HepG2 (cell line): ENCODE measurements at regions of chr19 and their contacts with region 1.

Region 1: GRCh38 chr19:2475702-2476450 is at the start of gene GADD45B:
- DNase-seq: peak; percentile 93
- ATAC-seq: peak; percentile 56
- H3K4me3 ChIP-seq: peak within 1 kb of the TSS; percentile 92 to 100 (median 98)
- H3K27ac ChIP-seq: peak within 1 kb of the TSS; percentile 56
- H3K4me1 ChIP-seq: peaks cover 33% of the 10 kb centered on the region
- H3K27me3 ChIP-seq: no peaks in the 10 kb centered on the region; a peak in 2 of 5 replicates
- CTCF ChIP-seq: no peak
- EP300 ChIP-seq: no peak; a peak in 2 of 4 replicates
- POLR2A ChIP-seq: peak; percentile 100
- RAD21 ChIP-seq: peak; percentile 36; the same call in 1 of the 2 replicates
- total RNA-seq, gene GADD45B: 3.2 and 4.6 TPM in 2 replicates

Region 2: DNA sequence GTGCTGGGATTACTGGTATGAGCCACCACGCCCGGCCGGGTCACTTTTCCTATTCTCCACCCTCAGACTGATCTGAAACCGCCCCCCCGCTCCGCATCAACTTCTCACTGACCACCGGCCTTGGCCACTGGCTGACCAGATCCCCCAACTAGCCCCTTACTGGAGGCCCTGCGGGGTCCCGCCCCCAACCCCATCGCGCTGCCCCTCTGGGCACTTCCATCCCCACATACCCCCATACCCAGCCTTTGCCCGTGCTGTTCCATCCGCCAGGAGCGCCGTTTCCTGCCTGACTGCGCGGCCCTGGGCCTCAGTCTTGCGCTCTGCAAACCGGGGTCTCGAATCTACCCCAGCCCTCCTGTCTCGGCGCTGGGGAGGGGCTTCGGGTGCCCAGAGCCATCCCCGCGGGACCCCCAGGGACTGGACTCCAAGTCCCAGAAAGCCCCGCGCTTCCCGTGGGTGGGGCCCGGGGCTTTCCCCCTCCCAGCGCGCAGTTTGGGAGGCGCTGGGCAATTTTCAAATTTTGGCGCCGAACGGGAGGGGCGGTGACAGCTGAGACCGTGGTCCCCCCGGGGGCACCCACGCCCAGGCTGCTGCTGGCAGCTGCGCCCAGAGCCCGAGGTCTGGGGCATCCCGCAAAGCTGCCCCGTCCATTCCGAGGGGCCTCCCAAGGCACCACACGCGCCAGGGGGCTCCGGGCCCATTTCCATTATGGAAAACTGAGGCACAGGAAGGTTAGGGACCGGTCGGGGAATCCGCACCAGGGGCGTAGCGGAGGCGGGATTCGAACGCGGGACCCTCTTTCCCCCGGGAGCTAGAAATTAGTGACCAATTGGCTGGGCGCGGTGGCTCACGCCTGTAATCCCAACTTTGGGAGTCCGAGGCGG is 13.9 kb before region 1 on chr19:
- CTCF ChIA-PET with region 1: no interaction called
- POLR2A ChIA-PET with region 1: interaction called, 42 read pairs
- in situ Hi-C with region 1: no loop called
- intact Hi-C with region 1: no loop called
- DNase-seq: no peak
- ATAC-seq: no peak
- H3K4me3 ChIP-seq: no peak overlapping the region
- H3K27ac ChIP-seq: no peak overlapping the region
- H3K4me1 ChIP-seq: peaks cover 59% of the 10 kb centered on the region
- H3K27me3 ChIP-seq: no peaks in the 10 kb centered on the region
- CTCF ChIP-seq: no peak
- EP300 ChIP-seq: no peak
- POLR2A ChIP-seq: no peak
- RAD21 ChIP-seq: no peak

Region 3: GRCh38 chr19:2512523-2513431 is 36.9 kb after region 1 on chr19:
- CTCF ChIA-PET with region 1: no interaction called
- POLR2A ChIA-PET with region 1: interaction called, 31 read pairs
- in situ Hi-C with region 1: no loop called
- intact Hi-C with region 1: no loop called
- DNase-seq: no peak
- ATAC-seq: peak; percentile 46
- H3K4me3 ChIP-seq: no peak overlapping the region; a peak in 1 of 6 replicates
- H3K27ac ChIP-seq: no peak overlapping the region
- H3K4me1 ChIP-seq: peaks cover 21% of the 10 kb centered on the region
- H3K27me3 ChIP-seq: peaks cover 0 to 15% of the 10 kb centered on the region in 2 experiments; a peak in 2 of 5 replicates
- CTCF ChIP-seq: no peak
- EP300 ChIP-seq: no peak
- POLR2A ChIP-seq: no peak
- RAD21 ChIP-seq: no peak

Region 4: GRCh38 chr19:2543463-2544442 is 67.9 kb after region 1 on chr19:
- CTCF ChIA-PET with region 1: no interaction called
- POLR2A ChIA-PET with region 1: interaction called, 199 read pairs
- in situ Hi-C with region 1: loop called (anchors 5 kb)
- intact Hi-C with region 1: loop called (anchors 5 kb)
- DNase-seq: peak; percentile 94
- ATAC-seq: peak; percentile 74
- H3K4me3 ChIP-seq: peak overlapping the region in 2 of 3 experiments; percentile 28 to 65; a peak in 4 of 6 replicates
- H3K27ac ChIP-seq: peak overlapping the region; percentile 98
- H3K4me1 ChIP-seq: peaks cover 81% of the 10 kb centered on the region
- H3K27me3 ChIP-seq: no peaks in the 10 kb centered on the region
- CTCF ChIP-seq: peak; percentile 73
- EP300 ChIP-seq: peak in 1 of 2 experiments; percentile 78; a peak in 3 of 4 replicates
- POLR2A ChIP-seq: peak; percentile 45 to 77
- RAD21 ChIP-seq: peak; percentile 88

Region 5: GRCh38 chr19:2602391-2603181 is 126.7 kb after region 1 on chr19:
- CTCF ChIA-PET with region 1: no interaction called
- POLR2A ChIA-PET with region 1: interaction called, 40 read pairs
- in situ Hi-C with region 1: no loop called
- intact Hi-C with region 1: no loop called
- DNase-seq: no peak
- ATAC-seq: peak; percentile 30; the same call in 2 of the 3 replicates
- H3K4me3 ChIP-seq: peak overlapping the region in 1 of 3 experiments; percentile 31; a peak in 1 of 6 replicates
- H3K27ac ChIP-seq: no peak overlapping the region
- H3K4me1 ChIP-seq: peaks cover 30% of the 10 kb centered on the region
- H3K27me3 ChIP-seq: no peaks in the 10 kb centered on the region
- CTCF ChIP-seq: no peak
- EP300 ChIP-seq: no peak
- POLR2A ChIP-seq: no peak
- RAD21 ChIP-seq: no peak

Region 6: DNA sequence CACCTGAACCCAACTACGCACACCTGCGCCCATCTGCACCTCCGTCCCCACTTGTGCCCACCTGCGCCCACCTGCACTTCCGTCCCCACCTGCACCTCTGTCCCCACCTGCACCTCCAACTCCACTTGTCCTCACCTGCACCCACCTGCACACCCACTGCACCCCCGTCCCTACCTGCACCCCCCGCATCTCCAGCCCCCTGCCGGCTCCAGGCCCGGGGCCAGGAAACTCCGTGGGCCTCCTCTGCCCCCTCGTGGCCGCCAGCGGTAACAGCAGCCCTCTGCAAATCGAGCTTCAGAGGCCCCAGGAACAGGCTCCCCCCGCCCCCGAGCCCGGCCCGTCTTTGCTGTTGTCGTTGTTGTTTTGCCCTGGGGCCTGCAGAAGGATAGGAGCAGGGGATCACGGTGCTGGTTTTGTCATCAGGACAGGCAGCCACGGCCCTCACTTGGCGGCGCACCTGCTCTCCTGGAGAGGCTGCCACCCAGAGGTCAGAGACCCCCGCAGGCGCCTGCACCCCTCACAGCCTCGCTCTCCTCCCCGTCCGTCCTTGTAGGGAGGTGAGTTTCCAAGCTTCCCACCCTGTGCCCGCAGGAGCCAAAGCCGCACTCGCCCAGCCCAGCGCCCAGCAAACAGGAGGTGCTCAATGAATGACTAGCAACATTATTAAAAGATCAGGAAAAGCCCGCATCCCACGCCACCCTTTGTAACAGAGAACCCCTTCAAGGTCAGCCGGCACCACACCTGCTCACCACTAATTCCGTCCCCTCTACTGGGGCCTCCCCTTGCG is 161.2 kb after region 1 on chr19:
- CTCF ChIA-PET with region 1: interaction called, 3 read pairs
- POLR2A ChIA-PET with region 1: interaction called, 25 read pairs
- in situ Hi-C with region 1: no loop called
- intact Hi-C with region 1: no loop called
- DNase-seq: peak; percentile 34
- ATAC-seq: peak; percentile 70
- H3K4me3 ChIP-seq: peak overlapping the region; percentile 1 to 63 (median 44); a peak in 3 of 6 replicates
- H3K27ac ChIP-seq: no peak overlapping the region
- H3K4me1 ChIP-seq: peaks cover 76% of the 10 kb centered on the region
- H3K27me3 ChIP-seq: no peaks in the 10 kb centered on the region; a peak in 1 of 5 replicates
- CTCF ChIP-seq: peak; percentile 94
- EP300 ChIP-seq: no peak
- POLR2A ChIP-seq: no peak
- RAD21 ChIP-seq: peak; percentile 82

Region 7: GRCh38 chr19:2926341-2927014 is 450.6 kb after region 1 on chr19:
- CTCF ChIA-PET with region 1: no interaction called
- POLR2A ChIA-PET with region 1: no interaction called
- in situ Hi-C with region 1: no loop called
- intact Hi-C with region 1: no loop called
- DNase-seq: no peak
- ATAC-seq: no peak
- H3K4me3 ChIP-seq: no peak overlapping the region
- H3K27ac ChIP-seq: no peak overlapping the region
- H3K4me1 ChIP-seq: peaks cover 12% of the 10 kb centered on the region
- H3K27me3 ChIP-seq: no peaks in the 10 kb centered on the region
- CTCF ChIP-seq: no peak
- EP300 ChIP-seq: no peak
- POLR2A ChIP-seq: no peak
- RAD21 ChIP-seq: no peak